ENCODE measurements at regions of chr9 and their contacts with region 1.

Region 1: DNA sequence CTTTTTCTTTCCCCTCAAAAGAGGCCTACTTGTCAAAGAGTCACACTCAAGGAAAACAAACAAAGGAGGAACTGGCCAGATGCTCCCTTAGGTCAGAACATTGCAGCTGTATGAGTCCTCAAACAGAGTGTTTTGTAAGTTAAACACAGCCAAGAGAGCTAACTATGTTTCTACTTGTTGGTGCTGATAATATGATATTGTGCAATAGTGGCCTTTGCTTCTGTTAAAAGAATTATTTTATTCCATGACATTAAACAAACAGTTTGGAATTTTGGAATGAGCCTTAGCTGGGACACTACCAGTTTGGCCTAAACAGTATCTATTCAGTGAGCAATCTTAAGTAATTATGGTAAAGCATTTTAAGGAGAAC is 56.0 kb upstream of the TPD52L3 start:
- DNase-seq: peak in 1 of 2 donors; percentile 20
- ATAC-seq: peak; percentile 80 to 97 (median 92)
- H3K4me3 ChIP-seq: no peak overlapping the region
- H3K27ac ChIP-seq: peak overlapping the region in 8 of 10 donors; percentile 40 to 66 (median 52)
- H3K4me1 ChIP-seq: peaks cover 0 to 6% (median 0%) of the 10 kb centered on the region in 9 donors
- H3K27me3 ChIP-seq: no peaks in the 10 kb centered on the region
- CTCF ChIP-seq: no peak

Region 2: GRCh38 chr9:6215562-6215961 is 56.7 kb before region 1 on chr9 and contains the start of gene IL33:
- intact Hi-C with region 1: loop called in 3 of 10 experiments (anchors 10 kb)
- DNase-seq: peak in 1 of 2 donors; percentile 70
- ATAC-seq: peak; percentile 57 to 89 (median 80)
- H3K4me3 ChIP-seq: peak within 1 kb of the TSS in 9 of 10 donors; percentile 16 to 56 (median 47)
- H3K27ac ChIP-seq: peak within 1 kb of the TSS in 9 of 10 donors; percentile 28 to 80 (median 69)
- H3K4me1 ChIP-seq: peaks cover 0 to 51% (median 6%) of the 10 kb centered on the region in 9 donors
- H3K27me3 ChIP-seq: no peaks in the 10 kb centered on the region
- CTCF ChIP-seq: no peak
- total RNA-seq, gene IL33: 11.8 to 41.8 (median 18.7) TPM

Region 3: GRCh38 chr9:6226696-6227095 is 45.5 kb before region 1 on chr9:
- intact Hi-C with region 1: loop called in 1 of 10 experiments (anchors 10 kb)
- DNase-seq: peak in 1 of 2 donors; percentile 39
- ATAC-seq: peak in 5 of 8 donors; percentile 18 to 62 (median 49)
- H3K4me3 ChIP-seq: no peak overlapping the region
- H3K27ac ChIP-seq: peak overlapping the region in 5 of 10 donors; percentile 25 to 59 (median 46)
- H3K4me1 ChIP-seq: peaks cover 2 to 95% (median 52%) of the 10 kb centered on the region in 9 donors
- H3K27me3 ChIP-seq: no peaks in the 10 kb centered on the region
- CTCF ChIP-seq: no peak

Region 4: DNA sequence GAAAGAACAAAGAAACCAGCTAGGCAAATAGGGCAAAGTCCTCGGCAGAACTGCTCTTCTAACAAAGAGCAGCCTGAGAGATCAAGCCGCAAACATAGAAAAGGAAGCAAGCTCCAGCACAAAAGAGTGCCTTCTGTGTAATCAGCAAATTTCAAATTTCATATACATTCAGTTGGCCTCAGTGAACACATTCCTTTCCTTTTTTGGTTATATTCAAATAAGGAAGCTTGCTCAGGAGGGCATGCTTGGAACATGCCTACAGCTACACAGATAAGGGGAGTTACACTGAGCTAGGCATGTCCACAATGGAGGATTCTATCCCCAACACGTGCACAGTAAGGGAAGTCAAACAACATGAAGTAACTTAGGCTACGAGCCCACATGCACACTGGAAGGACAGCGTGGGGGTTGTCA is 33.2 kb before region 1 on chr9:
- intact Hi-C with region 1: loop called in 1 of 10 experiments (anchors 5 kb)
- DNase-seq: no peak
- ATAC-seq: no peak
- H3K4me3 ChIP-seq: no peak overlapping the region
- H3K27ac ChIP-seq: no peak overlapping the region
- H3K4me1 ChIP-seq: peaks cover 0 to 12% (median 3%) of the 10 kb centered on the region in 9 donors
- H3K27me3 ChIP-seq: no peaks in the 10 kb centered on the region
- CTCF ChIP-seq: no peak

Region 5: GRCh38 chr9:6328103-6328502 is 55.9 kb after region 1 on chr9 and contains the start of gene TPD52L3:
- intact Hi-C with region 1: no loop called
- DNase-seq: no peak
- ATAC-seq: peak in 1 of 8 donors; percentile 34
- H3K4me3 ChIP-seq: no peak within 1 kb of the TSS
- H3K27ac ChIP-seq: no peak within 1 kb of the TSS
- H3K4me1 ChIP-seq: no peaks in the 10 kb centered on the region
- H3K27me3 ChIP-seq: peaks cover 0 to 2% (median 0%) of the 10 kb centered on the region in 7 donors
- CTCF ChIP-seq: no peak
- total RNA-seq, gene TPD52L3: not detected

Region 6: GRCh38 chr9:6715755-6716643 is 443.8 kb after region 1 on chr9:
- intact Hi-C with region 1: no loop called
- DNase-seq: peak; percentile 25 to 70
- ATAC-seq: peak; percentile 69 to 93 (median 88)
- H3K4me3 ChIP-seq: peak overlapping the region; percentile 23 to 59 (median 50)
- H3K27ac ChIP-seq: peak overlapping the region in 1 of 10 donors; percentile 23
- H3K4me1 ChIP-seq: peaks cover 0 to 6% (median 0%) of the 10 kb centered on the region in 9 donors
- H3K27me3 ChIP-seq: no peaks in the 10 kb centered on the region
- CTCF ChIP-seq: no peak

Measured in heart right ventricle (tissue), 16 donors.